GM13976 (cell line): ENCODE measurements at regions of chr20 and their contacts with region 1.

Region 1: GRCh38 chr20:37880726-37881591 is 22.0 kb upstream of the VSTM2L start:
- DNase-seq: no peak
- CTCF ChIP-seq: no peak

Region 2: DNA sequence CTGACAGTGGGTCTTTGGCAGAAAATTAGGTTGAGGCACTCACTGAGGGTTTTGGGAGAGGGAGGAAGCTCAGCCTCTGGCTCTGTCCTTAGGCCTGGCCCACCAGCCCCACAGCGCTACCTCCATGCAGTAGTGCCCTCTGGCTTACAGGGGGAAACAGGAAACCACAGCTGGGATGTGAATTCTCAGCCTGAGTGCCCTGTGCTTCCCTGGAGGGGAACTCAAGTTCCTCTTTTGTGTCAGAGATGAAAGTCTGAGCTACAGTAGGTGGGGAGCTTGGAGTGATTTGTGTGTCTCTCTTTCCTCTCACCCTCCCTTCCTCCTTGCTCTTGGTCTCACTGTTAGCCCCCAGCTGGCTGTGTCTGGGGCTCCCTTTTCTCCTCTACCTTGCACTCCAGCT is 305.1 kb before region 1 on chr20:
- in situ Hi-C with region 1: loop called (anchors 10 kb)
- DNase-seq: peak; percentile 56
- CTCF ChIP-seq: no peak